ENCODE measurements at regions of chr16 and their contacts with region 1.

Region 1: DNA sequence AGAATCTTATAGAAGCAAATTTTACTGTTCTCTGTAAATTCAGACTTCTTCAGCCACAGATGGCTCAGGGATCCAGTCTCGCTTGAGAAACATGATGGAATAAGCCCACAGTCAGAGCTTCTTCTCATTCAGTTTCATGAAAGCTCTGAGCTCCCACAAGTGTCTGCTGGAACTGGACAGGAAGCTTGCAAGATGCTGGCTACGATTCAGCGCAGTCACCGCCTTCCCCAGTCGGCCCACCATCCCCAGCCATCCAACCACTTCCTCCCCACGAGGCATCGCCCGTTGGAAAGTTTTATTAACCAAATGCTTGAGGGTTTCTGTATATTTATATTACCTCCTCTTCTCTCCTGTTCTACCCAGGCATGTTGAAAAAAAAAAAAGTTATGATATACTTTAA is 171.7 kb downstream of the ZFHX3 start:
- DNase-seq: peak; percentile 46 to 58
- H3K4me3 ChIP-seq: peak overlapping the region; percentile 18; the same call in 1 of the 2 replicates
- H3K27ac ChIP-seq: peak overlapping the region; percentile 95
- H3K4me1 ChIP-seq: peaks cover 46% of the 10 kb centered on the region
- H3K27me3 ChIP-seq: no peaks in the 10 kb centered on the region
- CTCF ChIP-seq: no peak

Region 2: GRCh38 chr16:72474501-72475123 is 401.6 kb before region 1 on chr16:
- CTCF ChIA-PET with region 1: no interaction called
- POLR2A ChIA-PET with region 1: no interaction called
- intact Hi-C with region 1: no loop called
- DNase-seq: peak in 1 of 2 experiments; percentile 56
- H3K4me3 ChIP-seq: no peak overlapping the region
- H3K27ac ChIP-seq: no peak overlapping the region
- H3K4me1 ChIP-seq: no peaks in the 10 kb centered on the region
- H3K27me3 ChIP-seq: no peaks in the 10 kb centered on the region
- CTCF ChIP-seq: no peak

Region 3: DNA sequence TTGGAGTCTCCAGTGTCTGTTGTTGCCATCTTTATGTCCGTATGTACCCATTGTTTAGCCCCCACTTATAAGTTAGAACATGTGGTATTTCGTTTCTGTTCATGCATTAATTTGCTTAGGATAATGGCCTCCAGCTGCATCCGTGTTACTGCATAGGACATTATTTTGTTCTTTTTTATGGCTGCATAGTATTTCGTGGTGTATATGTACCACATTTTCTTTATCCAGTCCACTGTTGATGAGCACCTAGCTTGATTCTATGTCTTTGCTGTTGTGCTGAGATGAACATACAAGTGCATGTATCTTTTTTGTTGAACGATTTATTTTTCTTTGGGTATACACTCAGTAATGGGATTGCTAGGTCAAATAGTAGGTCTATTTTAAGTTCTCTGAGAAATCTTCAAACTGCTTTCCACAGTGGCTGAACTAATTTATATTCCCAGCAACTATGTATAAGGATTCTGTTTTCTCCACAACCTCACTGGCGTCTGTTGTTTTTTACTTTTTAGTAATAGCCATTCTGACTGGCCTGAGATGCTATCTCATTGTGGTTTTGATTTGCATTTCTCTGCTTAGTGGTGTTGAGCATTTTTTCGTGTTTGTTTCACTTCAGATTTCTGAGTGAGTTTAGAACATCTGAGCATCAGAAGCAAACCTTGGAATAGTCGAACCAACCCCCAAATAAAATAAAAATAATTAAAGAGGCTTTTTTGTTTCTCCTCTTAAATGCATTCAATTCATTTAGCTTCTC is 133.0 kb before region 1 on chr16:
- CTCF ChIA-PET with region 1: no interaction called
- POLR2A ChIA-PET with region 1: no interaction called
- intact Hi-C with region 1: no loop called
- DNase-seq: no peak
- H3K4me3 ChIP-seq: no peak overlapping the region
- H3K27ac ChIP-seq: no peak overlapping the region
- H3K4me1 ChIP-seq: no peaks in the 10 kb centered on the region
- H3K27me3 ChIP-seq: no peaks in the 10 kb centered on the region
- CTCF ChIP-seq: no peak

Region 4: GRCh38 chr16:72847187-72848027 is 28.8 kb before region 1 on chr16:
- CTCF ChIA-PET with region 1: interaction called, 5 read pairs
- POLR2A ChIA-PET with region 1: no interaction called
- intact Hi-C with region 1: loop called (anchors 1 kb)
- DNase-seq: peak in 1 of 2 experiments; percentile 12
- H3K4me3 ChIP-seq: no peak overlapping the region
- H3K27ac ChIP-seq: no peak overlapping the region
- H3K4me1 ChIP-seq: peaks cover 19% of the 10 kb centered on the region
- H3K27me3 ChIP-seq: no peaks in the 10 kb centered on the region
- CTCF ChIP-seq: peak; percentile 47; the same call in 1 of the 2 replicates

Region 5: GRCh38 chr16:72927199-72928089 is 51.2 kb after region 1 on chr16:
- CTCF ChIA-PET with region 1: no interaction called
- POLR2A ChIA-PET with region 1: no interaction called
- intact Hi-C with region 1: loop called (anchors 1 kb)
- DNase-seq: peak; percentile 77 to 97
- H3K4me3 ChIP-seq: peak overlapping the region; percentile 53; the same call in 1 of the 2 replicates
- H3K27ac ChIP-seq: peak overlapping the region; percentile 78
- H3K4me1 ChIP-seq: peaks cover 35% of the 10 kb centered on the region
- H3K27me3 ChIP-seq: no peaks in the 10 kb centered on the region
- CTCF ChIP-seq: no peak

Region 6: DNA sequence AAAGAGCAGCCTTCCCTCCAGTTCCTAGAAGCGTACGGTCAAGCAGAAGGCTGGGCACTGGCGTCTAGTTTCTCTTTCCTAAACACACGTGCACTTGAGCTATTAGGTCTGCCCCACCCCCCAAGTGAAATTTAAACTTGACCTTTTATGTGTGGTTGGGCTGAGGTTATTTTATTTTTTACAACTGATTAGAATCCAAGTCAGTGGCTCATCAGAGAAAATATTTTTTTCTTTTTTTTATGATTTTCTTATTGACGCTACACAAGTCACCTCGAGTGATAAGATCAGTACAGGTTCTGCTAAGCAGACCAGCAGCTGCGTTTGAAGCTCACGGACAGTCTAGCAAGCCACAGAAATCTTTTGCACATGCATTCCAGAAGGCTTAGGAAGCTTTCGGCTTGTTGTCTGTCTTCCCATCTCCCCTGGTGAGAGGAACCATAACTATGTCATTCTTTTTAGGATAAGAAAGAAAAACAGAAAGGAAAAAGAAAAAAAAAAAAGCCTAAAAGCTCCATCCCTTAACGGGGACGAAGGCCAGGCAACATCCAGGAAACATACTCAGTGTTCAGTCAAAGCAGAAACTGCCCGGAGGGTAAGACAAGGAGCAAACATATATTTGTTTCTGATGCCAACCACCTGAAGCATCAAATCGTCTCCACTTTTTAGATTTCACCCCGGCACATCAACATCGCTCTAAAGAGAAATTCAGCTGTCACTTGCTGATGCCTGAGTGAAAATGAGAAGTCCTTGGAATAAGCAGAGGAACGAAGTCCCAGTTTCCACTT is 76.8 kb after region 1 on chr16:
- CTCF ChIA-PET with region 1: no interaction called
- POLR2A ChIA-PET with region 1: no interaction called
- intact Hi-C with region 1: loop called (anchors 2 kb)
- DNase-seq: peak in 1 of 2 experiments; percentile 43
- H3K4me3 ChIP-seq: no peak overlapping the region
- H3K27ac ChIP-seq: no peak overlapping the region
- H3K4me1 ChIP-seq: no peaks in the 10 kb centered on the region
- H3K27me3 ChIP-seq: no peaks in the 10 kb centered on the region
- CTCF ChIP-seq: no peak

Region 7: DNA sequence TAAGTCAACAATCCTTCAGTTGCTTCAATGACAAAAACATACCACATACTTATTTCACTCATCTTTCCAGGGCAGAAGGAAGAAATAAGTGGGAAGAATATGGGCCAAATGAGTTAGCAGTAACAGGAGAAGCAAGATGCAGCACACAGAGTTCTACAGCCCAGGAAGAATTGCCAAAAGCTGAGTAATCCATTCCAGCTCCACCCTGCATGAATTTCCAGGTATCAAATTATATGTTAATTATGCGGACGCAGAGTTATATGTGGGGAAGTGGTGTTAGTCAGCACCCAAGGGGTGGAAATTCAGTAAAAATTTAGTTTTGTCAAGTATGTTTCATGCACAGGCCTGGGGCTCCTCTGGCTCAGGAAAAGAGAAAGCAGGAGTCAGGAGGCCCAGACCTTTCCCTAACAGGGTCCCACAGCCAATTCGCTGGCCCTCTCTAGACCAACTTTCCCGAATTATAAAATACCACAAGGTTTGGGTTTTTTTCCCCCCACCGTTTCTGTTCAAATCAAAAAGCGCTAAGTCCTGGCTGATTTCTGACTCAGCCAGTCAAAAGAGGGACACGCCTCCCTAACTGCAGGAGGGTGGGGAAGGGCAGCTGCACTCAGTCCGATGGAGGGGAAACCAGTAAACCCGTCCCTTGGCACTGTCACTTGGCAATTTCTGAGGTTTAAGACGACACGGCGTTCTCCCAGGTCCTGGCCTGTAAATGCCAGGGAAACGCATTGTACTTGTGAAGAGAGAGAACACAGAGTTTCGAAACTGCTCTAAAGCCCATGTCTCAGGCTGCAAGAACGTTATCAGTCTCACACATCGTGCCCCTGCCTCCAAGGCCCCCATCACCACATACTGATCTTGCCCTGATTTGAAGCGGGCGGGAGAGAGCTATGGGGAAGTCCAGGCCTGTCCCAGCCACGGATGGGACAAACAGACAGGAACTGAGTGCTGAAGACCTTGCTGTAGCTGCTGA is 113.6 kb after region 1 on chr16:
- CTCF ChIA-PET with region 1: interaction called, 4 read pairs
- POLR2A ChIA-PET with region 1: interaction called, 4 read pairs
- intact Hi-C with region 1: loop called (anchors 1 kb)
- DNase-seq: peak; percentile 84 to 98
- H3K4me3 ChIP-seq: peak overlapping the region; percentile 46
- H3K27ac ChIP-seq: peak overlapping the region; percentile 99
- H3K4me1 ChIP-seq: peaks cover 78% of the 10 kb centered on the region
- H3K27me3 ChIP-seq: no peaks in the 10 kb centered on the region
- CTCF ChIP-seq: no peak

Measured in PC-9 (cell line).